ENCODE measurements at regions of chr19 and their contacts with region 1.

Region 1: DNA sequence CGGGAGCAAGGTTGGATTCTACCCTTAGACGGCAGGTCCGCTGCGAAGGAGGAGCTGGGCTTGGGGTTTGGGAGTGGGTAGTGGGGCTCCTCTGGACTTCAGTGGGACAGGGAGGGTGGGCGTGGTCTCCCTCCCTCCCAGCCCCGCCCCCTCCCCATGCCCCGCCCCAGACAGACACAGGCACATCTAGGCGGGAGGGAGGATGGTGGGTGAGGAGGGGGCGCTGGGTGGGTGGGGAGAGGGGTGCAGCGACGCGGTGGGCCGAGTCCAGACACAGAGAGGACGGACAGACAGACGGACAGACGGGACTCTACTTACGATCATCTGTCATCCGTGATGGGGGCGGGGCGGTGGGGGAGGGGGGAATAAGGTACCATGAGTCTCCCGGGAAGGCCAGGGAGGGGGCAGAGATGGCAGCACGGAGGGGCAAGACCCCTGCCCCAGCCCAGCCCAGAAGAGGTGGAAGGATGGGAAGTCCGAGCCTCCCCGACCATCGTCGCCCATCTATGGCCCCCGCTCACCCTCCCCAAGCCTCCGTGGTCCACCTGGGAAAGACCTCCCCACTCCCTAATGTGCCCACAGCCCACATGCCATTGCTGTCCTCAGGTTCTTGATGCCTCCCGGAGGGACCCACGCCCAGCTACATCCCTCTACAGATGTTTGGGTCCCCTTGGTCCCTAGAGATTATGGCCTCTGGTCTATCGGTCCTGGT is 64.8 kb downstream of the UNC13A start:
- DNase-seq: no peak
- H3K4me3 Mint-ChIP-seq: no peak overlapping the region
- H3K27ac Mint-ChIP-seq: no peak overlapping the region
- H3K4me1 Mint-ChIP-seq: peaks cover 17% of the 10 kb centered on the region
- H3K27me3 Mint-ChIP-seq: peaks cover 4% of the 10 kb centered on the region

Region 2: GRCh38 chr19:17305517-17306284 is 317.7 kb before region 1 on chr19 and contains the start of gene MRPL34:
- CTCF ChIA-PET with region 1: no interaction called
- POLR2A ChIA-PET with region 1: no interaction called
- DNase-seq: peak; percentile 98
- H3K4me3 Mint-ChIP-seq: peak within 1 kb of the TSS; percentile 89
- H3K27ac Mint-ChIP-seq: peak within 1 kb of the TSS; percentile 90
- H3K4me1 Mint-ChIP-seq: peaks cover 58% of the 10 kb centered on the region
- H3K27me3 Mint-ChIP-seq: no peaks in the 10 kb centered on the region
- total RNA-seq, gene MRPL34: 82.8 to 98.3 TPM

Region 3: GRCh38 chr19:17605761-17606745 is 17.3 kb before region 1 on chr19:
- CTCF ChIA-PET with region 1: interaction called, 23 read pairs
- POLR2A ChIA-PET with region 1: interaction called, 5 read pairs
- DNase-seq: peak; percentile 79
- H3K4me3 Mint-ChIP-seq: peak overlapping the region; percentile 68
- H3K27ac Mint-ChIP-seq: no peak overlapping the region
- H3K4me1 Mint-ChIP-seq: peaks cover 9% of the 10 kb centered on the region
- H3K27me3 Mint-ChIP-seq: peaks cover 34% of the 10 kb centered on the region

Region 4: DNA sequence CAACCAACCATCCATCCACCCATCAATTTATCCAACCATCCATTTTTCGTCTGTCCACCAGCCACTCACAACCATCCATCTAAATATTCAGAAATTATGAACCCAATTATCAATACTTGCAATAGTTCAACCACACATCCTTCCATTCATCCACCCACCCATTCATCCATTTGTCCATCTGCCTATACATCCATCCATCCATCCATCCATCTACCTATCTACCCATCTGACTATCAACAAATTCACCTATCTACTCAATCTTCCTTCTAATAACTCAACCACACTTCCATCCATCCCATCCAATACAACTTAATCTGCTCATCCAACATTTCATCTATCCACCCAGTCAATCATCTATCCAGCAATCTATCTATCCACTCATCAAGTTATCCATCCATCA is 18.5 kb after region 1 on chr19:
- CTCF ChIA-PET with region 1: no interaction called
- POLR2A ChIA-PET with region 1: no interaction called
- DNase-seq: no peak
- H3K4me3 Mint-ChIP-seq: no peak overlapping the region
- H3K27ac Mint-ChIP-seq: no peak overlapping the region
- H3K4me1 Mint-ChIP-seq: no peaks in the 10 kb centered on the region
- H3K27me3 Mint-ChIP-seq: peaks cover 3% of the 10 kb centered on the region